Activated naive CD8-positive, alpha-beta T cell treated with anti-CD3 and anti-CD28 coated beads, Interleukin-2, amount 10 ng/mL, durations not matched to agents 7 days and 5 days (primary cell): ENCODE measurements at regions of chr4 and their contacts with region 1.

Region 1: DNA sequence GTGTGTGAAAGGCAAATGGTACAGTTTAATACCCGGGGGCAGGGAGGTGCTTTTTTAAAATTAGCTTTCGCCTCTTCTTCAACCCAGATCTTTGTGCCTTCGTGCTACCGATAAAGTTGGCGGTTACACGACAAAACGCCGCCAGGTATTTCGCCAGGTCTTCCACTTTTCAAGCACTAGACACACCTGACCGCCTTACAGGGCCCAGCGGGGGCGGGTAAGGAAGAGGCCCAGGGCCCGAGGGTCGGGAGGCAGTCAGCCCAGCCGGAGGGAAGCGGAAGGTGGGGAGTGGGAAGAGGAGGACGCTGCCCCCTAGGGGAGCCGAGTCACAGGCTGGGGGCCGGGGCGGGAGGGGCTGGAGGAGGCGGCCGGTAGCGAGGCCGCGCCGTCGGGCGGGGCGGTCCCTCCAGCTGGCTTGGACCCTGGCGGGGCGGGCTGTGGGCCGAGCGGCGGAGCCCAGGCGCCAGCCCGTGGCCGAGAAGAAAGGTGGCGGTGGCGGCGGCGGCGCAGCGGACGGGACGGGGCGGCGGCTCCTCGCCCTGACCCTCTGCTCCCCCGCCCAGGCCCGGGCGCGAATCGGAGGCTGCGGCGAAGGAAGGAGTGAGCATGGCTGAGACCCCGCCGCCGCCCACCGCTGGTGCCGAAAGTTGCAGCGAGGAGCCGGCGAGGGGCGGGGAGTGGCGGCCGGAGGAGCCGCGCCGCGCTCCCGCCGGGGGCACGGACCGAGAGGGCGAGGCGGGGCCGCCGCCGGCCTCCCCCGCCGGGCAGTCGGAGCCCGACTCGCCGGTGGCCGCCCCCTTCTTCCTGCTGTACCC is 16.2 kb downstream of the UTP3 start:
- DNase-seq: peak; percentile 72
- ATAC-seq: peak; percentile 51
- H3K4me3 Mint-ChIP-seq: peak overlapping the region; percentile 94
- H3K27ac Mint-ChIP-seq: peak overlapping the region; percentile 93
- H3K4me1 Mint-ChIP-seq: peaks cover 26% of the 10 kb centered on the region
- H3K27me3 Mint-ChIP-seq: no peaks in the 10 kb centered on the region

Region 2: GRCh38 chr4:70496231-70496630 is 208.3 kb before region 1 on chr4:
- POLR2A ChIA-PET with region 1: no interaction called
- DNase-seq: no peak
- ATAC-seq: no peak
- H3K4me3 Mint-ChIP-seq: no peak overlapping the region
- H3K27ac Mint-ChIP-seq: no peak overlapping the region
- H3K4me1 Mint-ChIP-seq: no peaks in the 10 kb centered on the region
- H3K27me3 Mint-ChIP-seq: peaks cover 4% of the 10 kb centered on the region

Region 3: GRCh38 chr4:70687821-70688794 is 16.4 kb before region 1 on chr4 and contains the start of gene UTP3:
- POLR2A ChIA-PET with region 1: interaction called, 44 read pairs
- DNase-seq: peak; percentile 91
- ATAC-seq: peak; percentile 94
- H3K4me3 Mint-ChIP-seq: peak within 1 kb of the TSS; percentile 89
- H3K27ac Mint-ChIP-seq: peak within 1 kb of the TSS; percentile 96
- H3K4me1 Mint-ChIP-seq: peaks cover 28% of the 10 kb centered on the region
- H3K27me3 Mint-ChIP-seq: no peaks in the 10 kb centered on the region
- total RNA-seq, gene UTP3: 35.7 to 39.1 TPM

Region 4: GRCh38 chr4:70839589-70840093 is 135.1 kb after region 1 on chr4 and contains the start of gene GRSF1:
- POLR2A ChIA-PET with region 1: interaction called, 27 read pairs
- DNase-seq: peak; percentile 95
- ATAC-seq: peak; percentile 90
- H3K4me3 Mint-ChIP-seq: peak within 1 kb of the TSS; percentile 97
- H3K27ac Mint-ChIP-seq: peak within 1 kb of the TSS; percentile 94
- H3K4me1 Mint-ChIP-seq: peaks cover 22% of the 10 kb centered on the region
- H3K27me3 Mint-ChIP-seq: no peaks in the 10 kb centered on the region
- total RNA-seq, gene GRSF1: 58.6 to 61.0 TPM